Activated CD4-positive, alpha-beta T cell treated with anti-CD3 and anti-CD28 coated beads for 36 hours (primary cell): ENCODE measurements at regions of chr1 and their contacts with region 1.

Region 1: DNA sequence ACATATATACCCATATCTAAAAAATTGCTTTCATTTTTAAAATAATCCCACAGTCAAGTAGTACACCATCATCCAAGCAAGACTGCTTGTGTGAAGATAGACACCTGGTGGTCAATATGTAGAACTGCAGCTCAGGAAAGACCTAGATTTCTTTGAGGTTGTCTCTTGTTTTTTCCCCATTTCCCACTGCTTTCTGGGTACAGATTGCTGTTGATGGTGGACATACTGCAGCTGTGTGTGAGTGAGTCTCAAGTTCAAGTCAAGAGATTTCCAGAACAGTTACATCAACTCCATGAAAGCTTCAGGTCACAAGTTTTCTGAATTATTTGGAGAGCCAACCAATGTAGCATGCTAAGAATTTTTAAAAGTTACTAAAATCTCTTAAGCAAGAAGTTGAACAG is 306.4 kb downstream of the DUSP10 start:
- DNase-seq: no peak
- ATAC-seq: no peak
- H3K4me3 Mint-ChIP-seq: no peak overlapping the region
- H3K27ac Mint-ChIP-seq: no peak overlapping the region
- H3K4me1 Mint-ChIP-seq: peaks cover 39% of the 10 kb centered on the region
- H3K27me3 Mint-ChIP-seq: peaks cover 8% of the 10 kb centered on the region

Region 2: GRCh38 chr1:220272047-220272840 is 1163.3 kb before region 1 on chr1 and contains the start of gene RAB3GAP2:
- CTCF ChIA-PET with region 1: no interaction called
- POLR2A ChIA-PET with region 1: no interaction called
- intact Hi-C with region 1: loop called in 1 of 2 experiments (anchors 10 kb)
- DNase-seq: peak; percentile 98
- ATAC-seq: peak; percentile 95
- H3K4me3 Mint-ChIP-seq: no peak within 1 kb of the TSS
- H3K27ac Mint-ChIP-seq: no peak within 1 kb of the TSS
- H3K4me1 Mint-ChIP-seq: peaks cover 14% of the 10 kb centered on the region
- H3K27me3 Mint-ChIP-seq: peaks cover 4% of the 10 kb centered on the region
- total RNA-seq, gene RAB3GAP2: 50.6 to 67.3 TPM

Region 3: DNA sequence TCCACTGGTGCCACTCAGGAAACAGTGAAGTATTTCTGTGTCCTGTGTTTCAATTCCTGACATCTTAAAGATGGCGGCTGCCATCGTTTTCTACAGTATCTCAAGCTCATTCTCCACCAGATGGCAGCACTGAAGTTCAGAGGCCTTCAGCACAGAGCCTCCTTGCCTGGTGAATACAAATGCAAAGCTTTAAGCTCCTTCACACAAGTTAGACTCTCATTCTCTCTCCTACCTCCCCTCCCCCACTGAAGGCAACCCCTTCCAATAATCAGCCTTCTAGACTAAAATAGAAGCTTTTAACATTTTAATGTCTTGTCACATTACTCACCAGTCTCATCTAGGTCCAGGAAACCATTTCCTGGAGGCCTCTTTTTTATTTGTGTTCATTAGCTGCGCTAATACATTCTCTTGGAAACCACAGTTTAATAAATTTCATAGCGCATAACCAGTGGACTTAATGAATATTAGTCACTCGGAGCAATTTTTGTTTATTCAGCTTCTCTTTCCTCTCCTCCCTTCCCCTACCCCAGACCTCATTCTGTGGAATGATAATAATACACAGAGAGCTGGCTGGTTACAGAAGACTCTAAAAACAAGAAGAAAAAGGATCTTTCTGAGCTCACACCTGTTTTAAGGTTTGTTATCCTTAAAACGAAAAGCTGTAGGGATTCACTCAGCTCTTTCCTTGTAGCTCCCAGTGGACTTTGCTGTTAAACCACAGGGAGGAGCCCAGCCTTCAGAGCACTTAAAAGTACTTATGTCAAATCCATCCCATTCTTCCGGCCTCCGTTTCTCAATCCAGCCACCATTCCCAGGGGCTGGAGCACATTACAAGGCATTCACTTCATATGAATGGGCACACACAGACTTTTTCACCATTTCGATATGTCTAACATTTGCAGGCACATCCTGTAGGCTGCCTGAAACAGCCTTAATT is 171.4 kb before region 1 on chr1:
- CTCF ChIA-PET with region 1: interaction called, 15 read pairs
- POLR2A ChIA-PET with region 1: interaction called, 3 read pairs
- intact Hi-C with region 1: loop called (anchors 1 kb)
- DNase-seq: peak; percentile 62
- ATAC-seq: peak; percentile 66
- H3K4me3 Mint-ChIP-seq: no peak overlapping the region
- H3K27ac Mint-ChIP-seq: no peak overlapping the region
- H3K4me1 Mint-ChIP-seq: no peaks in the 10 kb centered on the region
- H3K27me3 Mint-ChIP-seq: peaks cover 10% of the 10 kb centered on the region

Region 4: DNA sequence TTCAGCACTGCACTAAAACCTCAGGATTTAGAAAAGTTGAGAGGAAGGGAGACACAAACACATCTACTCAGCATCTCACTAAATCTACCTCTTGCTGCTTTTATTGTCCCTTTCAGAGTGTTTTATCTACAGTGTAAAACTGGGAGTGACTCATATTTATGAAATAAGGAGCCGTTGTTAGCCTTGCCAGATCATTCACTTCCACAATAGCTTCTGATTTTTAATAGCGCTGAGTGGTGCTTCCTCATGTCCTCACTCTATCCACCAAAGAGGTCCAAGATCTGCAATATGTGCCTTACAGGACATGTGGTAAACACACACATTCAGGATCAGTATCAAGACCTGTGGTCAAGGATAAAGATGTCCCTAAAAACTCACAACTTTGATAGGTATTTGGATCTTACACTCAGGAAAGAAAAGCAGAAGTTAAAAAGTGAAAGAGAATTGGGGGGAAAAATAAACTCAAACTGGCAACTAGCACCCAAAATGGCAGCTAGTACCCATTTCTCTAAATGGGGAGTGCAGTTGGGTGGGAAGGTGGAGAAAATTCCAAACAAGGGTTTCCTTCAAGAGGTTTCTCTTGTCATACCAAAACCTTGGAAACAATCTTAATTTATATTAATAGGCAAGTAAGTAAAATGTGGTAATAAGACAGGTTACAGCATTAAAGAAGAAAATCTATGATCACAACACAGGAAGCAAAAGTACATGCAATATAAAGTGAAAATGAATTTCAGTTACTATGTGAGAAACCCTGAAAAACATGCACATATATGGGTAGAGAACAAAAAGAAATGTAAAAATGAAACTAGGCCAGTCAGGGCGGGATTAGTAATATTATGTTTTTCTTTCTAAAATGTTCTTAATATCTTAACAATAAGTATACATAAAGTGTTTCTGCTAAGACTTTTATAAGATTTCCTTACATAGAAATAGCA is 290.5 kb after region 1 on chr1:
- CTCF ChIA-PET with region 1: no interaction called
- POLR2A ChIA-PET with region 1: no interaction called
- intact Hi-C with region 1: loop called in 1 of 2 experiments (anchors 5 kb)
- DNase-seq: no peak
- ATAC-seq: peak; percentile 86
- H3K4me3 Mint-ChIP-seq: peak overlapping the region; percentile 39
- H3K27ac Mint-ChIP-seq: peak overlapping the region; percentile 94
- H3K4me1 Mint-ChIP-seq: peaks cover 78% of the 10 kb centered on the region
- H3K27me3 Mint-ChIP-seq: no peaks in the 10 kb centered on the region

Region 5: GRCh38 chr1:221794079-221794670 is 358.7 kb after region 1 on chr1:
- CTCF ChIA-PET with region 1: no interaction called
- POLR2A ChIA-PET with region 1: no interaction called
- intact Hi-C with region 1: loop called in 1 of 2 experiments (anchors 1 kb)
- DNase-seq: peak; percentile 54
- ATAC-seq: peak; percentile 91
- H3K4me3 Mint-ChIP-seq: no peak overlapping the region
- H3K27ac Mint-ChIP-seq: peak overlapping the region; percentile 89
- H3K4me1 Mint-ChIP-seq: peaks cover 34% of the 10 kb centered on the region
- H3K27me3 Mint-ChIP-seq: no peaks in the 10 kb centered on the region

Region 6: GRCh38 chr1:222455188-222455879 is 1019.8 kb after region 1 on chr1:
- CTCF ChIA-PET with region 1: no interaction called
- POLR2A ChIA-PET with region 1: no interaction called
- intact Hi-C with region 1: loop called in 1 of 2 experiments (anchors 1 kb)
- DNase-seq: peak; percentile 91
- ATAC-seq: peak; percentile 99
- H3K4me3 Mint-ChIP-seq: no peak overlapping the region
- H3K27ac Mint-ChIP-seq: peak overlapping the region; percentile 21
- H3K4me1 Mint-ChIP-seq: peaks cover 16% of the 10 kb centered on the region
- H3K27me3 Mint-ChIP-seq: no peaks in the 10 kb centered on the region